IMR-90 (cell line): ENCODE measurements at regions of chr3 and their contacts with region 1.

Region 1: GRCh38 chr3:184314363-184314699 is at the start of gene EIF4G1:
- DNase-seq: peak; percentile 94
- ATAC-seq: peak; percentile 80
- H3K4me3 ChIP-seq: peak within 1 kb of the TSS; percentile 91
- H3K27ac ChIP-seq: peak within 1 kb of the TSS; percentile 99
- H3K4me1 ChIP-seq: peaks cover 16% of the 10 kb centered on the region
- H3K27me3 ChIP-seq: no peaks in the 10 kb centered on the region
- CTCF ChIP-seq: no peak
- POLR2A ChIP-seq: peak; percentile 89
- RAD21 ChIP-seq: no peak
- total RNA-seq, gene EIF4G1: 225 TPM in 2 replicates

Region 2: DNA sequence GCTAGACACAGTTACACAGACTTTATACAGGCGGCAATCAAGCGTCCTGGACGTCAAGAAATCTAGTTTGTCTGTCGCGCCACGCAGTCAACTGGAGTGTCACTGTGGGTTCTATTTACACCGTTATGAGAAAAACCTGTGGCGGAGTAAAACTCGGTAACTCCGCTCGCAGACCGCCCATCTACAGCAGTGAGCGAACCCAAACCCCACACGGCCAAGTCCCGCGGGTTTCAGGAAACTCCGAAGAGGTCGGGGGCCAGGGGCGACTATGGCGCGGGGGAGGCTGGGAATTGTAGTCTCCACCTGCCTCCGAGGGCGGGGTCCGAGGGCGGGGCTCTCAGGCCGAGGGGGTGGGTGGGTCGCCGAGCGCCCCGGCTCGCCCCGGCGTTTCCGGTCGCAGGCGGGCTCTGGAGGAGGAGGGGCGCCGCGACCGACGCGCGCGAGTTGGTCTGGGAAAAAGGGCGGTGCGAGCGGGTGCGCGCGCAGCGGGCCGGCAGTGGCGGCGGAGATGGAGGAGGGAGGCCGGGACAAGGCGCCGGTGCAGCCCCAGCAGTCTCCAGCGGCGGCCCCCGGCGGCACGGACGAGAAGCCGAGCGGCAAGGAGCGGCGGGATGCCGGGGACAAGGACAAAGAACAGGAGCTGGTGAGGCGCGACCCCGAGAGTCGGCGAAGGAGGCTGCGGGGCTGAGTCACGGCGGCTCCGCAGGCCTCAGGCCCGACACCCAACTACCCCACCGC is 15.4 kb before region 1 on chr3 and contains the start of gene PSMD2:
- CTCF ChIA-PET with region 1: no interaction called
- POLR2A ChIA-PET with region 1: no interaction called
- dilution Hi-C with region 1: no loop called
- in situ Hi-C with region 1: no loop called
- intact Hi-C with region 1: loop called (anchors 1 kb)
- DNase-seq: peak; percentile 93
- ATAC-seq: peak; percentile 98
- H3K4me3 ChIP-seq: peak within 1 kb of the TSS; percentile 96
- H3K27ac ChIP-seq: peak within 1 kb of the TSS; percentile 91
- H3K4me1 ChIP-seq: peaks cover 2% of the 10 kb centered on the region; the same call in 1 of the 2 replicates
- H3K27me3 ChIP-seq: peaks cover 3% of the 10 kb centered on the region; the same call in 1 of the 2 replicates
- CTCF ChIP-seq: no peak
- POLR2A ChIP-seq: peak; percentile 71
- RAD21 ChIP-seq: no peak
- total RNA-seq, gene PSMD2: 697 and 872 TPM in 2 replicates

Region 3: GRCh38 chr3:184362668-184363540 is 48.6 kb after region 1 on chr3:
- CTCF ChIA-PET with region 1: no interaction called
- POLR2A ChIA-PET with region 1: no interaction called
- dilution Hi-C with region 1: no loop called
- in situ Hi-C with region 1: no loop called
- intact Hi-C with region 1: loop called (anchors 2 kb)
- DNase-seq: peak; percentile 97
- ATAC-seq: peak; percentile 64
- H3K4me3 ChIP-seq: peak overlapping the region; percentile 56
- H3K27ac ChIP-seq: peak overlapping the region; percentile 95
- H3K4me1 ChIP-seq: peaks cover 7% of the 10 kb centered on the region
- H3K27me3 ChIP-seq: no peaks in the 10 kb centered on the region
- CTCF ChIP-seq: peak; percentile 68
- POLR2A ChIP-seq: peak; percentile 74
- RAD21 ChIP-seq: peak; percentile 28; the same call in 1 of the 2 replicates